ENCODE measurements at regions of chr6 and their contacts with region 1.

Region 1: DNA sequence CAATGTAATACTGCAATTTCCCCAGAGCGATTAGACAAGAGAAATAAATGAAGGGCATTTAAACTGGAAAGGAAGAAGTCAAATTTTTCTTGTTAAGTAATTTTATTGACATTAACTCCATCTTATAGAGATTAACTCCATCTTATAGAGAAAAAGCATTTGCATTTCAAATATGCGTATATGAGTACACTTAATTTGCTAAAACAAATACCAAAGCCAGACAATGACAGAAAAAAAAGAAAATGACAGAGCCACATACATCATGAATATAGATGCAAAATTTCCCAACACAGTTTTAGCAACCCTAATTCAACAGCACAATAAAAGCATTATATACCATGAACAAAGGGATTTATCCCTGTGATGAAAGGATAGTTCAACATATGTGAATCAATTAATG is 1293.1 kb upstream of the EYS start:
- DNase-seq: no peak
- ATAC-seq: no peak
- H3K4me3 ChIP-seq: no peak overlapping the region
- H3K27ac ChIP-seq: no peak overlapping the region
- H3K4me1 ChIP-seq: no peaks in the 10 kb centered on the region
- H3K27me3 ChIP-seq: no peaks in the 10 kb centered on the region
- CTCF ChIP-seq: no peak
- POLR2A ChIP-seq: no peak
- RAD21 ChIP-seq: no peak

Region 2: GRCh38 chr6:66496659-66497058 is 503.5 kb before region 1 on chr6:
- CTCF ChIA-PET with region 1: no interaction called
- POLR2A ChIA-PET with region 1: no interaction called
- dilution Hi-C with region 1: no loop called
- in situ Hi-C with region 1: no loop called
- intact Hi-C with region 1: no loop called
- DNase-seq: no peak
- ATAC-seq: no peak
- H3K4me3 ChIP-seq: no peak overlapping the region
- H3K27ac ChIP-seq: no peak overlapping the region
- H3K4me1 ChIP-seq: no peaks in the 10 kb centered on the region
- H3K27me3 ChIP-seq: no peaks in the 10 kb centered on the region
- CTCF ChIP-seq: no peak
- POLR2A ChIP-seq: no peak
- RAD21 ChIP-seq: no peak

Region 3: GRCh38 chr6:66964216-66964615 is 35.9 kb before region 1 on chr6:
- CTCF ChIA-PET with region 1: no interaction called
- POLR2A ChIA-PET with region 1: no interaction called
- dilution Hi-C with region 1: no loop called
- in situ Hi-C with region 1: no loop called
- intact Hi-C with region 1: no loop called
- DNase-seq: no peak
- ATAC-seq: no peak
- H3K4me3 ChIP-seq: no peak overlapping the region
- H3K27ac ChIP-seq: no peak overlapping the region
- H3K4me1 ChIP-seq: no peaks in the 10 kb centered on the region
- H3K27me3 ChIP-seq: no peaks in the 10 kb centered on the region
- CTCF ChIP-seq: no peak
- POLR2A ChIP-seq: no peak
- RAD21 ChIP-seq: no peak

Region 4: GRCh38 chr6:67045076-67045475 is 45.0 kb after region 1 on chr6:
- CTCF ChIA-PET with region 1: no interaction called
- POLR2A ChIA-PET with region 1: no interaction called
- dilution Hi-C with region 1: no loop called
- in situ Hi-C with region 1: no loop called
- intact Hi-C with region 1: loop called (anchors 1 kb)
- DNase-seq: no peak
- ATAC-seq: no peak
- H3K4me3 ChIP-seq: no peak overlapping the region
- H3K27ac ChIP-seq: no peak overlapping the region
- H3K4me1 ChIP-seq: no peaks in the 10 kb centered on the region
- H3K27me3 ChIP-seq: no peaks in the 10 kb centered on the region
- CTCF ChIP-seq: no peak
- POLR2A ChIP-seq: no peak
- RAD21 ChIP-seq: no peak

Measured in IMR-90 (cell line).